Activated CD4-positive, alpha-beta T cell treated with anti-CD3 and anti-CD28 coated beads, Interleukin-2, amount 10 ng/mL, durations not matched to agents 24 days and 14 days (primary cell): ENCODE measurements at regions of chr9 and their contacts with region 1.

Region 1: DNA sequence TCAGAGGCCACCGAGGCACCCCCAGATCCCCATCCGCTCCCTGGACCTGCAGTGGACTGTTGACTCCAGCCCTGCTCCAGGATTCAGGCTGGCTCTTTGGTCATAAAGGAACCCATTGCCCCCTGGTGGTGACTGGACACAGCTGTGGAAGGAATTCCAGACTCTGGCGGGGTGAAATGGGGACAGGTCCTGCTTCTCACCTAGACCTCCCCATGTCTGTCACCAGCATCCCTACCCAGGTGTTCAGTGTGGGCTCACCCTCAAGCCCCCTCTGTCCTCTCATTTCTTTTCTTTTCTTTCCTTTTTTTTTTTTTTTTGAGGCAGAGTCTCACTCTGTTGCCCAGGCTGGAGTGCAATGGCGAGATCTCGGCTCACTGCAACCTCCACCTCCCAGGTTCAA is 25.5 kb upstream of the STXBP1 start:
- DNase-seq: peak; percentile 89
- H3K4me3 Mint-ChIP-seq: no peak overlapping the region
- H3K27ac Mint-ChIP-seq: no peak overlapping the region
- H3K4me1 Mint-ChIP-seq: peaks cover 13% of the 10 kb centered on the region
- H3K27me3 Mint-ChIP-seq: peaks cover 23% of the 10 kb centered on the region

Region 2: DNA sequence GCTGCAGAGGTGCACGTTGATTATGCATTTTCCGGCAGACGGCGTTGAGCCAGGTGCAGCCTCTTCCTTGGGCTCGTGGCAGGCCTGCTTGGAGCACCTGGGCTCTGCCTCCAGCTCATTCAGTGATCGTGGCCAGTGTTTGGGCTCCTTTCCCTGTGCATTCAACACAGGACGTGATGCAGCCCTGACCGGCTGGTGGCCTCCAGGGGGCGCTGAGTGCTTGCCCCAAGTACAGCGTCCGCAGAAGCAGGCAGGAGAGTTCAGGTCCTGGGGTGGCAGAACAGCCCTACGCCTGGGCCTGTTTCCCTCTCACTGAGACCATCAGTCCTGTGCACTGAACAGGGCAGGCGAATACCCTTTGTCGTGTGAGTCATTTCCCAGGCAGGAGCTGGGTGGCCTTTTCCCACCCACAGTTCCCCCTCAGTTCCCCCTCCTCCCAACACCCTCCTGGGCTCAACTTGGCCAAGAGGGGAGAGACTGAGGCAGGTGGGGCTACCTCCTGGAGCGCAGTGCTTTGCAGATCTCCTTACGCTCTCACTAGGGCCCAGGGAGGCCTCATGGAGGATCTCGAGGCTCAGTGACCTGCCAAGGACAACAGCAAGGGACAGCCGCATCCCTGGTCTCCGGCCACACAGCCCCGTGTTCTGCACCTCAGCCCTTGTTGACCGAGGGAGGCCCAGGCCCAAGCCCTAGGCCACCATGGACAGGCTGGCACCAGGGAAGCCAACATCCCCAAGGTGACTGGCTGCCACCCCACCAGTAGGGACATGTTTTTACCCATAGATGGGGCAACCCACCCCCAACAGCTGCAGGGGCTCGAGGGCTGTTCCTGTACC is 82.4 kb before region 1 on chr9:
- intact Hi-C with region 1: loop called (anchors 1 kb)
- DNase-seq: peak; percentile 94
- H3K4me3 Mint-ChIP-seq: no peak overlapping the region
- H3K27ac Mint-ChIP-seq: no peak overlapping the region
- H3K4me1 Mint-ChIP-seq: peaks cover 2% of the 10 kb centered on the region
- H3K27me3 Mint-ChIP-seq: no peaks in the 10 kb centered on the region

Region 3: GRCh38 chr9:127525401-127526187 is 60.9 kb before region 1 on chr9:
- intact Hi-C with region 1: loop called (anchors 1 kb)
- DNase-seq: peak; percentile 70
- H3K4me3 Mint-ChIP-seq: no peak overlapping the region
- H3K27ac Mint-ChIP-seq: no peak overlapping the region
- H3K4me1 Mint-ChIP-seq: peaks cover 16% of the 10 kb centered on the region
- H3K27me3 Mint-ChIP-seq: no peaks in the 10 kb centered on the region

Region 4: DNA sequence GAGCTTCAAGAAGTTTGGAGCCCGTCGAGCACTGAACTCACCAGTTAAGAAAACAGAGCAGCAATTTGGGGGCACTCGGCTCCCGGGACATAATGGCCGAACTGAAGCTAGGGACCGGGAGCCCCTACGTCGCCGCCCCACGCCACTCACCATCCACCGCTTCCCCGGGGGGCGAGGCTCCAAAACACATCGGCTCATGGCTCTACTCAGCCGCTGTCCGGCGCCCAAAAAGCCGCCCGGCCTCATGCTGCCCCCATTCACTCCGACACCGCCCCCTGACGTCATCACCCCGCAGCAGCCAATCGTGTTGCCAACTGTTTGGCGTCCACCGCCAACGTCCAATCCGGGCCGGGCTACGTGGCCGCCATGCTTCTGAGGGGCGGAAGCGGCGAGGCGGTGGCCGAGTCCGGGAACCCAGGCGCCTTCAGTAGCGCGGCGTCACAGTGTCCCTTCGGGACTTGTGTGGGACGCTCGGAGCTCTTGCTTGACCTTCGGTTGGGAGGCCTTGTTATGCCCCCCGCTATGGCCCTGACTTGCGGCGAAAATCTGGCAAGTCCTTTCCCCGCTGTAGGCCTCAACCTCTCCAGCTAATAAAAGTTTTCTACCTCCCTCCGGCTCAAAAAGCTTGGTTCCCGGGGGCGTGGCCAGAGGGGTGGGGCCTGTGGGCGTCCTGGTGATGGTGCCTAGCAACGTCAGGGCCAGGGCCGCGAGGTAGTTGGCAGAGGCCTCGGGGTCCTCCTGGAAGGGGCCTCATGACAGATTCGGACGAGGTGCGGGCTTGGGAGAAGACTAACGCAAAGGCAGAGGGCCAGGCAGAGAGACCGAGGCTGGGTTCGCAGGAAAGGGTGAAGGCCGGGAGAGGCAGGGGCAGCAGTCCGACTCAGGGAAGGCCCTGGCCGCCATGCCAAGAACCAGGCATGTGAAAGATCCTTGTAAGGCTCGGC is 129.1 kb after region 1 on chr9 and contains the starts of genes PTRH1 and TTC16:
- intact Hi-C with region 1: no loop called
- DNase-seq: peak; percentile 100
- H3K4me3 Mint-ChIP-seq: peak within 1 kb of the TSS; percentile 100
- H3K27ac Mint-ChIP-seq: peak within 1 kb of the TSS; percentile 99
- H3K4me1 Mint-ChIP-seq: peaks cover 27% of the 10 kb centered on the region
- H3K27me3 Mint-ChIP-seq: peaks cover 2% of the 10 kb centered on the region
- total RNA-seq, gene PTRH1: 22.8 TPM in 2 replicates
- total RNA-seq, gene TTC16: not detected in 2 replicates